CD4-positive, alpha-beta memory T cell (primary cell): ENCODE measurements at regions of chr2 and their contacts with region 1.

Region 1: GRCh38 chr2:118882709-118883210 is 35.3 kb upstream of the EN1 start:
- DNase-seq: peak in 4 of 5 donors; percentile 41 to 64 (median 58)
- H3K4me3 ChIP-seq: peak overlapping the region in 1 of 2 donors; percentile 46
- H3K4me3 Mint-ChIP-seq: peak overlapping the region; percentile 27 to 89 (median 86)
- H3K27ac ChIP-seq: no peak overlapping the region
- H3K27ac Mint-ChIP-seq: peak overlapping the region in 3 of 7 donors; percentile 42 to 83 (median 67)
- H3K4me1 ChIP-seq: peaks cover 15% of the 10 kb centered on the region
- H3K4me1 Mint-ChIP-seq: peaks cover 10 to 22% (median 13%) of the 10 kb centered on the region in 4 donors
- H3K27me3 ChIP-seq: no peaks in the 10 kb centered on the region
- H3K27me3 Mint-ChIP-seq: peaks cover 4 to 8% of the 10 kb centered on the region in 2 donors

Region 2: DNA sequence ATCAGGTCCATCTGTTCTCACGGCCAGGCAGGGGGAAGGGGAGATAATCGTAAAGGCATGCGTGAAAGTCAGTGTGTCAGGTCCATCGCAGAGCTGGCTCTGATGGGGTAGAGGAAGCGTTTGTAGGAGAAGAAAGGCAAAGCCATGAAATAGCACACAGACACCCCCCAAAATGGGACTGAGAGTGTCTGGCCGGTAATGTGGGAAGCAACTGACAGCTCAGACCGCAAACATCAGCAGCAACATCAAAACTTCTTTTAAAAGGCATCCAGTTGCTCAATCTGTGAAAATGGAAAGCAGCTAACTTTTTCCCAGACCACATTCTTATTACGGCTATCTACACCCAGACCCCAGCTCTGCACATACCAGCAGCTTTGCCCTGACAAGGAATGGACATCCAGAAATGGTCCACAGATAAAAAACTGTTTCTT is 267.9 kb before region 1 on chr2:
- CTCF ChIA-PET with region 1: no interaction called
- POLR2A ChIA-PET with region 1: no interaction called
- intact Hi-C with region 1: no loop called
- DNase-seq: no peak
- H3K4me3 ChIP-seq: no peak overlapping the region
- H3K4me3 Mint-ChIP-seq: no peak overlapping the region
- H3K27ac ChIP-seq: no peak overlapping the region
- H3K27ac Mint-ChIP-seq: no peak overlapping the region
- H3K4me1 ChIP-seq: no peaks in the 10 kb centered on the region
- H3K4me1 Mint-ChIP-seq: no peaks in the 10 kb centered on the region
- H3K27me3 ChIP-seq: no peaks in the 10 kb centered on the region
- H3K27me3 Mint-ChIP-seq: peaks cover 4 to 5% of the 10 kb centered on the region in 2 donors

Region 3: DNA sequence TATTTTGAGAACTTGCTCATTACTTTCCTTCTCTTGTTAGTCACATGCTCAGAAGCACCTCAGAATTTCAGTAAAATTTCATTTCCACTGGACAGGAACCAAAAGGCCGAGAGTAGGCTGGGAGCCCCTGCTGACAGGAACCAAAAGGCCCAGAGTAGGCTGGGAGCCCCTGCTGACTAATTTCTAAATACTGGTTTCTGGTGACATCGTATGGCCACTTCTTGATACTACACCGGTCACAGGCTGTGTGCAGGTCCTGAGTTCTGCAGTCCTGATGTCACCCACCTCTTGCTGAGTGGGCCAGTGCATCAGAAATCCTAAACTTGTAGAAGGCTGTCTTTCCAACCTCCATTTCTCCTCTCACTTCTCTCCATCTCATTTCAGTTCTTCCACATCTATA is 17.7 kb before region 1 on chr2:
- CTCF ChIA-PET with region 1: interaction called, 19 read pairs
- POLR2A ChIA-PET with region 1: no interaction called
- intact Hi-C with region 1: no loop called
- DNase-seq: peak in 1 of 5 donors; percentile 23
- H3K4me3 ChIP-seq: no peak overlapping the region
- H3K4me3 Mint-ChIP-seq: no peak overlapping the region
- H3K27ac ChIP-seq: no peak overlapping the region
- H3K27ac Mint-ChIP-seq: no peak overlapping the region
- H3K4me1 ChIP-seq: no peaks in the 10 kb centered on the region
- H3K4me1 Mint-ChIP-seq: no peaks in the 10 kb centered on the region
- H3K27me3 ChIP-seq: peaks cover 5% of the 10 kb centered on the region
- H3K27me3 Mint-ChIP-seq: peaks cover 31 to 32% of the 10 kb centered on the region in 2 donors

Region 4: DNA sequence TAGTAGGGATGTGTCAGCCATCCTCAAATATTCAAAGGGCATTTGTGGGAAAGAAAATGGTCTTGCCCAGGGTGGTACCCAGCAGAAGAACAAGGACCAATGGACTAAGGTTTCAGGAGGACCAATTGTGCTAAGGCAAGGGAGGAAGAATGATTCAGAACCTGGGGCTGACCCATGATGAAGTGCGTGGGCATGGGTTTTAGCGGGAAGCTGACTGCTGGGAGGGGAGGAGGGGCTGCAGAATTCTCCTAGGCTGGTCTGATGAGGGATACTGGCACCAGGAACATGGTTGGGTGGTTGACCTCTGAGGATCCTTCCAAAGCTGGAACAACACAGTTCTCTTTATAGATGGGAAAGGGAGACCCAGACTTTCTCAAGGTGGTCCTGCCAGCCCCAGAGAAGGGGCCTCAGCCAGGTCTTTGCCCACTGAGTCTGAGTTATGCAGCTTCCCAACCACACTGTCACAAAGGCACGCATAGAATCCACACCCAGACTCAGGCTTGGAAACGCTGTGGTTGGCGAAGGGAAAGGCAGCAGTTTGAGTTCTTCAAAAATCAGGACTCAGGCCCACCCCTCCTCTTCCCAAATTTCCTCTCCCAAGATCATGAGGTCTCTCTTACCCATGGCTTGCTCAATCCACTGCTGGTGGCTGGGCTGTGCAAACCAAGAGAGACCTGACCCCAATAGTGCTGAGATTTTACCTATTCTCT is 96.5 kb after region 1 on chr2:
- CTCF ChIA-PET with region 1: no interaction called
- POLR2A ChIA-PET with region 1: no interaction called
- intact Hi-C with region 1: no loop called
- DNase-seq: no peak
- H3K4me3 ChIP-seq: no peak overlapping the region
- H3K4me3 Mint-ChIP-seq: no peak overlapping the region
- H3K27ac ChIP-seq: no peak overlapping the region
- H3K27ac Mint-ChIP-seq: no peak overlapping the region
- H3K4me1 ChIP-seq: no peaks in the 10 kb centered on the region
- H3K4me1 Mint-ChIP-seq: no peaks in the 10 kb centered on the region
- H3K27me3 ChIP-seq: no peaks in the 10 kb centered on the region
- H3K27me3 Mint-ChIP-seq: peaks cover 0 to 6% of the 10 kb centered on the region in 2 donors

Region 5: DNA sequence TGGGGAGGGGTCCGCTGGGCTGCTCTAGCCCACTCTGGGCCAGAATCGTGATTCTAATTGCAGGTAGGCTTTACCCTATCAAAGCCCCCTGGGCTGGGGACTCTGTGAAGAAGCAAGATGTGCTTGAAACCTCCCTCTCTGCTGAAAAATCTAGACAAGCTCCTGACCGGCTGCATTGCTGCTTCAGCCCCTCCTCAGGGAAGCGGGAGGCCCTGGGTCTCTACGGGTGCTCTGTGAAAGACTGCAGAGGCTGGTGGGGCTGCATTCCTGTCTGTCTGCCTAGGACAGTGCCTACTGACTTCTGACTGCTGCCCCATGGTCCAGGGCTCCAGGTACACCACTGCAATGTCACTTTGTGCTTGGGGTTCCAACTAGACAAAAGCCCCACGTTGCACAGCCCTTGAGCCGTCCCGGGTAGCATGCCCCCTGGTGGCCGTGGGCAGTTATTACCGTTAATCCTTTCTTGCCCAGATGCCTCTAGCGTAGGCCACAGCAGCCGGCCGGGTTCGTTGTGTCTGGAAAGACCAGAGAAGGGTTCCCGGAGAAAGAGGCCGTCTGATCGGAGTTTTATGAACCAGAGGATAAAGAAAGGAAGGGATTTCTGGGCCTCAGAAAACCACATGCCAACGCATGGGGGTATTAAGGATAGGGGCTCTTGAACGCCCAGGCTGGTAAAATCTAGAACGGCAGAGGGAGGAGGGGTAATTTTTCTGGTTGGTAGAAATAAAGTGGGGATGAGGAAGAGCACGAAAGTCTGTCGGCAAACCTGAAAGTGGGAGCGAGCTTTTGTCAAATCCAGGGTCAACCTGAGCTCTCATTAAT is 291.7 kb after region 1 on chr2:
- CTCF ChIA-PET with region 1: interaction called, 20 read pairs
- POLR2A ChIA-PET with region 1: no interaction called
- intact Hi-C with region 1: no loop called
- DNase-seq: peak in 4 of 5 donors; percentile 17 to 36 (median 27)
- H3K4me3 ChIP-seq: no peak overlapping the region
- H3K4me3 Mint-ChIP-seq: no peak overlapping the region
- H3K27ac ChIP-seq: no peak overlapping the region
- H3K27ac Mint-ChIP-seq: no peak overlapping the region
- H3K4me1 ChIP-seq: no peaks in the 10 kb centered on the region
- H3K4me1 Mint-ChIP-seq: no peaks in the 10 kb centered on the region
- H3K27me3 ChIP-seq: no peaks in the 10 kb centered on the region
- H3K27me3 Mint-ChIP-seq: peaks cover 0 to 2% of the 10 kb centered on the region in 2 donors

Region 6: DNA sequence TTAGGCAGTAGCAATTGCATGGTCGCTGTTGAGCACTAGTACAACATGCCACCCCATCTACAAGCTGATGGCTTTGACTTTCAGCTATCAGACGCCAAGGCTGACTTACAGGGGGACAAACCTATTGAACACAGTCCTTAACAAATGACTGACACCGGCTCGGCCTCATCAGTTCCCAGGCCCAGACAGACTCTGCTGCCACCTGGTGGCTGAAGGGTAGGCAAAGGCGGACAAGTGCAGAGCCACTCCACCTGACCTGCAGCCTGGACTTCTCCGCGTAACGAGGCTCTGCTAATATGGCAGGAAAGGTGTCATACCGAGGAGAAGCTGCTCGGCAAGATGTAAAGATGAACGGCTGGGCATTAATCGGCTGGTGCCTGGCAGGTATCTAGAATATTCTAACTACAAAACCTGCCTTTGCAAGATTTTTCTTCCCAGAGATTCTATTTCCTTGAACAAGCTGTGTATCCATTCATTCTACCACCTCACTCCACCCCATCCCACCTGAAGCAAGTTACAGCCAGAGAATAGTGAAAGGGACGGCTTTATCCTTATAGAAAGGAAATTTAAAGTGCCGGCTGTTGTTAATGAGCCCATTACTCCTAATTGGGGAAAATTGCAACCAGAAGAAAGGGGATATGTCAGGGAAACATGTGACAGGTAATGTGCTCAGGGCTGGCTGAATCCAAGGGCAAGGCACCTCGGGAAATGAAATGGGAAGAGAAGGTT is 408.3 kb after region 1 on chr2:
- CTCF ChIA-PET with region 1: interaction called, 26 read pairs
- POLR2A ChIA-PET with region 1: no interaction called
- intact Hi-C with region 1: no loop called
- DNase-seq: peak in 3 of 5 donors; percentile 29 to 63 (median 42)
- H3K4me3 ChIP-seq: no peak overlapping the region
- H3K4me3 Mint-ChIP-seq: no peak overlapping the region
- H3K27ac ChIP-seq: no peak overlapping the region
- H3K27ac Mint-ChIP-seq: no peak overlapping the region
- H3K4me1 ChIP-seq: peaks cover 3% of the 10 kb centered on the region
- H3K4me1 Mint-ChIP-seq: peaks cover 0 to 4% (median 0%) of the 10 kb centered on the region in 4 donors
- H3K27me3 ChIP-seq: no peaks in the 10 kb centered on the region
- H3K27me3 Mint-ChIP-seq: no peaks in the 10 kb centered on the region

Region 7: DNA sequence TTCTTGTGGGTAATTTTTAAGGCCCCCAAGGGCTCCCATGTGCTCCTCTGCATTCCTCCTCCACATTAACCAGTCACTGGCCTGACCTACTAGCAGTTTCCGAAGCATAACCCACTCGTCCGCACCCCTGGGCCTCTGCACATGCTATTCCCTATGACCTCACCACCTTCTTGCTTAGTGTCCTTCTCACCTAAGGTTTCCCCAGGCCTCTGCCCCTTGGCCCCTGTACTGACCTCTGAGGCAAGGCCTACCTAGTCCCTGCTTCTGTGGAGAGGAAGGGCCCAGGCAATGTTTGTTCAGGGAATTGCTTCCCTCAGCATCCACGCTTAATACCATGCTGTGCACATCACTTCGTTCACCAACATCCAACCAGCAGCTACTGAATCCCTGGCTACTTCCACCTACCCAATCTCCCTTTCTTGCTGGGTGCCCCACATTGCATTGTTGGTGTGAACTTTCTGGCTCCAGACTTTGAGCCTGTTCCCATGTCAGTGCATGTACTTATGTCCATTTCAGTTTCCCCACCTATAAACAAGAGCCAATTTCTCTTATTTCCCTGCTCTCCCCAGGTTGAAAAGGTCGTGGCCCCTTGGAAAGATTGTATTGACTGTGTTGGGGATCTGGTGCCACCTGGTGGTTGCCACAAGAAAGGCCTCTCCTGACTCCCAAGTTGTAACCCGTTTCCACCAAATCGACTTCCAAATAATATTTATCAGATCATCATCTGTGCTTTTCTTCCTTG is 777.0 kb after region 1 on chr2:
- CTCF ChIA-PET with region 1: no interaction called
- POLR2A ChIA-PET with region 1: no interaction called
- intact Hi-C with region 1: loop called (anchors 5 kb)
- DNase-seq: peak in 4 of 5 donors; percentile 20 to 36 (median 24)
- H3K4me3 ChIP-seq: no peak overlapping the region
- H3K4me3 Mint-ChIP-seq: peak overlapping the region in 1 of 8 donors; percentile 67
- H3K27ac ChIP-seq: no peak overlapping the region
- H3K27ac Mint-ChIP-seq: peak overlapping the region in 2 of 7 donors; percentile 1 to 9
- H3K4me1 ChIP-seq: no peaks in the 10 kb centered on the region
- H3K4me1 Mint-ChIP-seq: peaks cover 0 to 15% (median 3%) of the 10 kb centered on the region in 4 donors
- H3K27me3 ChIP-seq: no peaks in the 10 kb centered on the region
- H3K27me3 Mint-ChIP-seq: peaks cover 10 to 11% of the 10 kb centered on the region in 2 donors